Naive thymus-derived CD4-positive, alpha-beta T cell (primary cell): ENCODE measurements at regions of chr13 and their contacts with region 1.

Region 1: DNA sequence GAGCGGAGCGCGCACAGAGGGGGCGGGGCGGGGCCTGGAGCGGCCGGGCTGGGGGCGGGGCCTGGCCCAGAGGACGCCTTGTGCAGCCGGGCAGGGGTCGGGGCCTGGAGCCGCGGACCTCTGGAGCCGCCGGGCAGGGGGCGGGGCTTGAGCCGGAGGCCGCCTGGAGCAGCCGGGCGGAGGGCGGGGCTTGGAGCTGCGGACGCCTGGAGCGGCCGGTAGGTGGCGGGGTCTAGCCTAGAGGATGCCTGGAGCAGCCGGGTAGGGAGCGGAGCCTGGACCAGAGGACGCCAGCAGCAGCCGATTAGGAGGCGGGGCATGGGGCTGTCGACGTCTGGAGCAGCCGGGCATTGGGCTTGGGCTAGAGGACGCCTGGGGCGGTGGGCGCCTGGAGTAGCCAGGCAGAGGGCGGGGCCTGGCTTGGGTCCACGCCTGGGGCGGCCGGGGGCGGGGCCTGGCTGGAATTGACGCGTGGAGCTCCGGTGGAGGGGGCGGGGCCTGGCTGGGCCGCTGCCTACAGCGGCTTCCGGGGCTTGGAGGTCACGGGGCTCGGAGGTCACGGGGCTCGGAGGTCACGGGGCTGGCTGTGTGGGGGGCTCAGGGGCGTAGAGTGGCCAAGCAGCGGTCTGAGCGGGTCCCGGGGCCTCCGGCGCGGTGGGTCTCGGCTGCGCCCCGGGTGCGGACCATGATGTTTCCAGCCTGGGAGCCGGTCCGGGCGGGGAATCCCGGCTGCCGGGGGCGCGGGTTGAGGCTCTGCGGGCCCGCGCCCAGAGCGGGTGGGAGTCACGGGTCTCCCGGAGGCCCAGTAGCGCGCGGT is at the start of gene ANKRD10:
- DNase-seq: peak; percentile 82 to 99 (median 89)
- ATAC-seq: peak; percentile 87
- H3K4me3 ChIP-seq: peak within 1 kb of the TSS; percentile 82
- H3K4me3 Mint-ChIP-seq: peak within 1 kb of the TSS; percentile 90 to 97 (median 92)
- H3K27ac ChIP-seq: peak within 1 kb of the TSS; percentile 89
- H3K27ac Mint-ChIP-seq: peak within 1 kb of the TSS; percentile 89 to 97 (median 91)
- H3K4me1 ChIP-seq: peaks cover 22 to 23% of the 10 kb centered on the region in 2 donors
- H3K4me1 Mint-ChIP-seq: peaks cover 25 to 57% (median 44%) of the 10 kb centered on the region in 7 donors
- H3K27me3 ChIP-seq: no peaks in the 10 kb centered on the region
- H3K27me3 Mint-ChIP-seq: no peaks in the 10 kb centered on the region
- total RNA-seq, gene ANKRD10: 129 to 155 (median 132) TPM

Region 2: DNA sequence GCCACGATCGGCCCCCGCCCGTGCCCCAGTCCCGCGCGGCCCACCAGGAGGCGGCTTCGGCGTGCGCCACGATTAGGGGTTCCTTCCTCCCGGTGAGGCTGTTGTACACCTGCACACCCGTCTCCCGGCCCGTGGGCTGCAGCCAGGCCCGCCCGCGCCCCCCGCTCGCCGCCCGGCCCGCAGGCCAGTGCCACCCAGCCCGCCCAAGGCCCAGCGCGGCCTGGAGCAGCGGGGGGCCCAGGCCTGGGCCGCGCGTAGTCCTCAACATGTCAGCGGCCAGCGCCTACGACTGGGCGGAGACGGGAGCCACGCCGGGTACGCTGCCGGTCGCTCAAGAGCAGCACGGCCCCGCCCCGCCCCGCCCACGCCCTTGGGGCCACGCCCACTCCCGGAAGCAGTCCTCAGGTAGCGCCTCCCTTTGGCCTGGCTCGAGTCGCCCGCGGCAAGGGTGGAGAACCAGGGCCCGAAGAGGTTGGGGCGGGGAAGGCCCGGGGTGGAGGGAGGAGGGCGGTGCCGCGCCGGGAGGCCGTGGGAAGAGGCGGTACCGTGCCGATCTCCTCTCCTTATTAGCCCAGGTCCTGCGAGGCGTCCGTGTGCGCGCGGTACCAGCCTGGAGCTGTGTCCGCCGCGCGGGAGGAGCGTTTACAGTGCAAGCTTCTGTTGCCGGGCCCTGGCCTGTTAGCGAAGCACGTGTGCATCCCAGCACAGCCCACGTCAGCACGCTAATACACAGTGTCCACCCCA is 209.3 kb before region 1 on chr13 and contains the start of gene CARS2:
- CTCF ChIA-PET with region 1: no interaction called
- POLR2A ChIA-PET with region 1: interaction called, 3 read pairs
- intact Hi-C with region 1: loop called (anchors 1 kb)
- DNase-seq: peak; percentile 72 to 93 (median 84)
- ATAC-seq: peak; percentile 97
- H3K4me3 ChIP-seq: peak within 1 kb of the TSS; percentile 66
- H3K4me3 Mint-ChIP-seq: peak within 1 kb of the TSS; percentile 81 to 95 (median 93)
- H3K27ac ChIP-seq: peak within 1 kb of the TSS; percentile 87
- H3K27ac Mint-ChIP-seq: peak within 1 kb of the TSS; percentile 71 to 96 (median 89)
- H3K4me1 ChIP-seq: peaks cover 15 to 23% of the 10 kb centered on the region in 2 donors
- H3K4me1 Mint-ChIP-seq: peaks cover 25 to 56% (median 45%) of the 10 kb centered on the region in 7 donors
- H3K27me3 ChIP-seq: no peaks in the 10 kb centered on the region
- H3K27me3 Mint-ChIP-seq: peaks cover 0 to 3% (median 0%) of the 10 kb centered on the region in 5 donors
- total RNA-seq, gene CARS2: 73.1 to 106 (median 89.7) TPM

Region 3: GRCh38 chr13:110841846-110842245 is 73.4 kb before region 1 on chr13:
- CTCF ChIA-PET with region 1: no interaction called
- POLR2A ChIA-PET with region 1: no interaction called
- intact Hi-C with region 1: no loop called
- DNase-seq: no peak
- ATAC-seq: no peak
- H3K4me3 ChIP-seq: no peak overlapping the region
- H3K4me3 Mint-ChIP-seq: no peak overlapping the region
- H3K27ac ChIP-seq: no peak overlapping the region
- H3K27ac Mint-ChIP-seq: no peak overlapping the region
- H3K4me1 ChIP-seq: no peaks in the 10 kb centered on the region
- H3K4me1 Mint-ChIP-seq: peaks cover 0 to 1% (median 0%) of the 10 kb centered on the region in 7 donors
- H3K27me3 ChIP-seq: peaks cover 0 to 4% of the 10 kb centered on the region in 2 donors
- H3K27me3 Mint-ChIP-seq: peaks cover 31 to 53% (median 38%) of the 10 kb centered on the region in 5 donors

Region 4: GRCh38 chr13:110890279-110891165 is 24.7 kb before region 1 on chr13:
- CTCF ChIA-PET with region 1: no interaction called
- POLR2A ChIA-PET with region 1: no interaction called
- intact Hi-C with region 1: loop called in 1 of 2 experiments (anchors 2 kb)
- DNase-seq: no peak
- ATAC-seq: no peak
- H3K4me3 ChIP-seq: no peak overlapping the region
- H3K4me3 Mint-ChIP-seq: no peak overlapping the region
- H3K27ac ChIP-seq: no peak overlapping the region
- H3K27ac Mint-ChIP-seq: peak overlapping the region in 1 of 9 donors; percentile 16
- H3K4me1 ChIP-seq: no peaks in the 10 kb centered on the region
- H3K4me1 Mint-ChIP-seq: peaks cover 0 to 6% (median 0%) of the 10 kb centered on the region in 7 donors
- H3K27me3 ChIP-seq: no peaks in the 10 kb centered on the region
- H3K27me3 Mint-ChIP-seq: no peaks in the 10 kb centered on the region

Region 5: DNA sequence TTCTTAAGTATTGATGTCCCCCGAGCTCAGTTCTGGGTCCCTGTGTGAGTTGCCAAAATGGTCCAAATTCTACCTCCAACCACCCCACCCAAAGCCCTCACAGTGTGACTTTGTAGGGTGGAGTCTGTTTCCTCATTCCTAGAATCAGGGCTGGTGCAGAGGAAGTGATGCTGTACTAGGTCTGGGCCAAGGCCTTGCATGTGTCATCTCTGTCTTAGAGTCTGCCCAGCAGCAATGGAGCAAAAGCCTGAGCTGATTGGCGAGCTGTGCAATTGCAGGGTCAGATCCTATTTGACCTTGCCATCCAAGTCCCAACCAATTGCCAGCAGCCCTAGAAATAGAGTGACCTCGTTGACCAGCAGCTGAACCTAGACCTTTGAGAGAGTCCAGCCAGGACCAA is 96.6 kb after region 1 on chr13:
- CTCF ChIA-PET with region 1: no interaction called
- POLR2A ChIA-PET with region 1: no interaction called
- intact Hi-C with region 1: loop called in 1 of 2 experiments (anchors 1 kb)
- DNase-seq: no peak
- ATAC-seq: peak; percentile 38
- H3K4me3 ChIP-seq: no peak overlapping the region
- H3K4me3 Mint-ChIP-seq: peak overlapping the region in 1 of 10 donors; percentile 72
- H3K27ac ChIP-seq: no peak overlapping the region
- H3K27ac Mint-ChIP-seq: peak overlapping the region in 1 of 9 donors; percentile 89
- H3K4me1 ChIP-seq: no peaks in the 10 kb centered on the region
- H3K4me1 Mint-ChIP-seq: peaks cover 0 to 32% (median 0%) of the 10 kb centered on the region in 7 donors
- H3K27me3 ChIP-seq: peaks cover 0 to 4% of the 10 kb centered on the region in 2 donors
- H3K27me3 Mint-ChIP-seq: peaks cover 6 to 18% (median 14%) of the 10 kb centered on the region in 5 donors

Region 6: GRCh38 chr13:111043575-111043982 is 128.3 kb after region 1 on chr13:
- CTCF ChIA-PET with region 1: no interaction called
- POLR2A ChIA-PET with region 1: no interaction called
- intact Hi-C with region 1: no loop called
- DNase-seq: no peak
- ATAC-seq: peak; percentile 18
- H3K4me3 ChIP-seq: no peak overlapping the region
- H3K4me3 Mint-ChIP-seq: no peak overlapping the region
- H3K27ac ChIP-seq: no peak overlapping the region
- H3K27ac Mint-ChIP-seq: no peak overlapping the region
- H3K4me1 ChIP-seq: no peaks in the 10 kb centered on the region
- H3K4me1 Mint-ChIP-seq: peaks cover 0 to 10% (median 0%) of the 10 kb centered on the region in 7 donors
- H3K27me3 ChIP-seq: no peaks in the 10 kb centered on the region
- H3K27me3 Mint-ChIP-seq: peaks cover 16 to 28% (median 21%) of the 10 kb centered on the region in 5 donors

Region 7: GRCh38 chr13:111184458-111185401 is 269.5 kb after region 1 on chr13:
- CTCF ChIA-PET with region 1: no interaction called
- POLR2A ChIA-PET with region 1: interaction called, 3 read pairs
- intact Hi-C with region 1: loop called in 1 of 2 experiments (anchors 2 kb)
- DNase-seq: peak in 7 of 9 donors; percentile 52 to 68 (median 55)
- ATAC-seq: peak; percentile 67
- H3K4me3 ChIP-seq: peak overlapping the region; percentile 22
- H3K4me3 Mint-ChIP-seq: peak overlapping the region; percentile 65 to 88 (median 82)
- H3K27ac ChIP-seq: peak overlapping the region; percentile 62
- H3K27ac Mint-ChIP-seq: peak overlapping the region; percentile 84 to 98 (median 93)
- H3K4me1 ChIP-seq: peaks cover 50 to 92% of the 10 kb centered on the region in 2 donors
- H3K4me1 Mint-ChIP-seq: peaks cover 84 to 100% (median 95%) of the 10 kb centered on the region in 7 donors
- H3K27me3 ChIP-seq: no peaks in the 10 kb centered on the region
- H3K27me3 Mint-ChIP-seq: no peaks in the 10 kb centered on the region

Region 8: GRCh38 chr13:112689303-112690165 is 1774.3 kb after region 1 on chr13 and contains the start of gene ATP11A:
- CTCF ChIA-PET with region 1: no interaction called
- POLR2A ChIA-PET with region 1: no interaction called
- intact Hi-C with region 1: loop called in 1 of 2 experiments (anchors 5 kb)
- DNase-seq: peak; percentile 67 to 90 (median 74)
- ATAC-seq: peak; percentile 85
- H3K4me3 ChIP-seq: peak within 1 kb of the TSS; percentile 78
- H3K4me3 Mint-ChIP-seq: peak within 1 kb of the TSS; percentile 79 to 96 (median 94)
- H3K27ac ChIP-seq: peak within 1 kb of the TSS; percentile 88
- H3K27ac Mint-ChIP-seq: peak within 1 kb of the TSS; percentile 79 to 96 (median 90)
- H3K4me1 ChIP-seq: peaks cover 15 to 26% of the 10 kb centered on the region in 2 donors
- H3K4me1 Mint-ChIP-seq: peaks cover 39 to 54% (median 50%) of the 10 kb centered on the region in 7 donors
- H3K27me3 ChIP-seq: no peaks in the 10 kb centered on the region
- H3K27me3 Mint-ChIP-seq: no peaks in the 10 kb centered on the region
- total RNA-seq, gene ATP11A: 45.0 to 111 (median 79.8) TPM